Activated CD4-positive, alpha-beta T cell treated with anti-CD3 and anti-CD28 coated beads, Interleukin-2, amount 10 ng/mL, durations not matched to agents 24 days and 14 days (primary cell): ENCODE measurements at regions of chr3 and their contacts with region 1.

Region 1: DNA sequence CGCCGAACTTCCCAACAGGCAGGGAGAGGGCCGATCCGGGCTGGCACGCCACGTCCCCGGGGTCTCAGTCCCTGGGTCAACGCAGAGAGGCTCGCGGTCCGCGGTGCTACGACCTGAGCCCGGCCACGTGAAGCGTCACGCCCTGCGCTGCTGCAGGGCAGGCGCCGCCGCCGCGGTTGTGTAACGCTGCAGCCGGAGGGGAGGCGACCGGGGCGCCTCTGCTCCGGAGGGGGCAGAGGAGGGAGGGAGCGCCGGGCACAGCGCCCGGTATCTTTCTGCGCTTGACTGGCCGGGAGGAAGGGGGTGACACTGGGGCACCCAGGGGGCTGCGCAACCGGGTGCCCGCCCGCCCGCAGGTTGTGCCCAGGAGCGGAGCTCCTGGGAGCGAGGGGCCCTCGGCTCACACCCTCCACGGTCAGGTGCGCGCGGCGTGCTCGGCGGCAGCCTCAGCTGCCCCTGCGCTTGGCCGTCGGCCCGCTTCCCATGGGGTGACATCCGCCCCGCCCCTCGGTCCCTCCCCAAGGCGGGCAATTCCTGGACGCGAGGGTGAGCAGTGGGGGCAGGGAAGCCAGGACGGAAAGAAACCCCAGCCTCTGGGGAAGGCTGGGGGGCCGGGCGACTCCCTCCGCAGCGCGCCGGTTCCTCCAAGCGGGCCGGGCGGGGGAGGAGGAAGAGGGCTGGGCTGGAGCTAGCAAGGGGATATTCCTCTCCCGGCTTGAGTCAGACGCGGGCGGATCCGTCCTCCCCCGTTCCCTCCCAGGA is 852 bp upstream of the BHLHE40 start:
- DNase-seq: peak; percentile 97
- H3K4me3 Mint-ChIP-seq: peak overlapping the region; percentile 96
- H3K27ac Mint-ChIP-seq: peak overlapping the region; percentile 100
- H3K4me1 Mint-ChIP-seq: peaks cover 33% of the 10 kb centered on the region
- H3K27me3 Mint-ChIP-seq: no peaks in the 10 kb centered on the region

Region 2: DNA sequence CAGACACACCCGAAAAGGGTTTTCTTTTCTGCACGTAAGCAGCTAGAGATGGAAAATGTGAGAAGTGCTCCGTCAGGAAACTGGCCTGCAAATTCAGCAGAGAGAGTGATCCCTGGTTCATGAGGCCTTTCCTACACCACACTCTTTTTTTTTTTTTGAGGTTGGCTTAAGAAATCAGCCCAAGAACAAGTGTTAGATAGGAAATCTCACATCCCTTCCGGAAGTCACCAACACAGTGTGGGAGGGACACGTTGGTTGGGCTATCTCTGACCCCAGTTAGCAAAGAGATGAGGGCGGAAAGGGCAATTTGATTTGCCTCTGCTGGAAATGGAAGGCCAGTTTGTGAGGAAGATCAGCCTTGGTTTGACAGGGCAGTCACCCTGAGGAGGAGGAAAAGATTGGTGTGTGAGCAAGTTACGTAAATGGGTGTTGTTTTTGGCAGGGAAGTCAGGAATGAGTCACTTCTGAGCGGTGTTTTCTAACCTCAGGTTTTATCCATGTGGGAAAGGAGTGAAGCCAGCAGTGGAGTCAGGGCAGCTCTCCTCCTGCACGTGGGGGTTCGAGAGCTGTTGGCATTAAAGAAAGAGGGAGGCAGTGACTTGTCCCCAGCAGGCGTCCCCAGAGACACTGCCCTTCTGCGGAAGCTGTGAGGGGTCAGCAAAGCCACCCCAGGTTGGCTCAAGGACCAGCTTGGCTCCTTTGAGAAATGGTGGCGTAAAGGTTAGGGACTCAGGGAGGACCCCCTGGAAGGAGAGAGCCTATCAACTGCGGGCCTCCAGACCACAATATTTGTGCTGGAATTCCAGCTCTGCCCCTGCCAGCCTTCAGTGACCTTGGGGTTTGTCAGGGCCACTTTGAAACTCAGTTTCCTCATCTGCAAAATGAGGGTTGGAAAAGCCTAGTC is 236.7 kb before region 1 on chr3:
- intact Hi-C with region 1: loop called (anchors 1 kb)
- DNase-seq: peak; percentile 71
- H3K4me3 Mint-ChIP-seq: peak overlapping the region; percentile 47
- H3K27ac Mint-ChIP-seq: peak overlapping the region; percentile 89
- H3K4me1 Mint-ChIP-seq: peaks cover 66% of the 10 kb centered on the region
- H3K27me3 Mint-ChIP-seq: no peaks in the 10 kb centered on the region

Region 3: GRCh38 chr3:4821975-4822374 is 156.4 kb before region 1 on chr3:
- intact Hi-C with region 1: loop called (anchors 1 kb)
- DNase-seq: peak; percentile 93
- H3K4me3 Mint-ChIP-seq: peak overlapping the region; percentile 75
- H3K27ac Mint-ChIP-seq: peak overlapping the region; percentile 97
- H3K4me1 Mint-ChIP-seq: peaks cover 84% of the 10 kb centered on the region
- H3K27me3 Mint-ChIP-seq: no peaks in the 10 kb centered on the region

Region 4: GRCh38 chr3:4850928-4851265 is 127.5 kb before region 1 on chr3:
- intact Hi-C with region 1: loop called (anchors 1 kb)
- DNase-seq: peak; percentile 87
- H3K4me3 Mint-ChIP-seq: peak overlapping the region; percentile 72
- H3K27ac Mint-ChIP-seq: peak overlapping the region; percentile 99
- H3K4me1 Mint-ChIP-seq: peaks cover 77% of the 10 kb centered on the region
- H3K27me3 Mint-ChIP-seq: no peaks in the 10 kb centered on the region

Region 5: GRCh38 chr3:4906107-4906621 is 72.2 kb before region 1 on chr3:
- intact Hi-C with region 1: loop called (anchors 1 kb)
- DNase-seq: peak; percentile 71
- H3K4me3 Mint-ChIP-seq: peak overlapping the region; percentile 60
- H3K27ac Mint-ChIP-seq: peak overlapping the region; percentile 88
- H3K4me1 Mint-ChIP-seq: peaks cover 77% of the 10 kb centered on the region
- H3K27me3 Mint-ChIP-seq: no peaks in the 10 kb centered on the region

Region 6: GRCh38 chr3:5026331-5027218 is 48.2 kb after region 1 on chr3:
- intact Hi-C with region 1: loop called (anchors 1 kb)
- DNase-seq: peak; percentile 90
- H3K4me3 Mint-ChIP-seq: peak overlapping the region; percentile 87
- H3K27ac Mint-ChIP-seq: peak overlapping the region; percentile 93
- H3K4me1 Mint-ChIP-seq: peaks cover 49% of the 10 kb centered on the region
- H3K27me3 Mint-ChIP-seq: no peaks in the 10 kb centered on the region

Region 7: GRCh38 chr3:5187156-5187919 is 209.0 kb after region 1 on chr3 and contains the start of gene EDEM1:
- intact Hi-C with region 1: loop called (anchors 1 kb)
- DNase-seq: peak; percentile 99
- H3K4me3 Mint-ChIP-seq: peak within 1 kb of the TSS; percentile 99
- H3K27ac Mint-ChIP-seq: peak within 1 kb of the TSS; percentile 97
- H3K4me1 Mint-ChIP-seq: peaks cover 29% of the 10 kb centered on the region
- H3K27me3 Mint-ChIP-seq: no peaks in the 10 kb centered on the region
- total RNA-seq, gene EDEM1: 167 and 168 TPM in 2 replicates